Pancreas (tissue), 10 donors: ENCODE measurements at regions of chr12 and their contacts with region 1.

Region 1: GRCh38 chr12:53701518-53702260 is 25.6 kb downstream of the CALCOCO1 start:
- DNase-seq: peak; percentile 63 to 90 (median 80)
- ATAC-seq: peak; percentile 94 to 99 (median 98)
- H3K4me3 ChIP-seq: no peak overlapping the region
- H3K27ac ChIP-seq: no peak overlapping the region
- H3K4me1 ChIP-seq: no peaks in the 10 kb centered on the region
- H3K27me3 ChIP-seq: peaks cover 0 to 13% (median 0%) of the 10 kb centered on the region in 4 donors
- CTCF ChIP-seq: peak; percentile 78 to 86 (median 82)

Region 2: GRCh38 chr12:53625946-53626701 is 75.6 kb before region 1 on chr12 and contains the start of gene ATF7:
- intact Hi-C with region 1: no loop called
- DNase-seq: peak; percentile 96 to 100 (median 99)
- ATAC-seq: peak; percentile 94 to 98 (median 96)
- H3K4me3 ChIP-seq: peak within 1 kb of the TSS; percentile 24 to 60 (median 45)
- H3K27ac ChIP-seq: peak within 1 kb of the TSS; percentile 76 to 97 (median 88)
- H3K4me1 ChIP-seq: peaks cover 3 to 29% (median 16%) of the 10 kb centered on the region in 3 donors
- H3K27me3 ChIP-seq: no peaks in the 10 kb centered on the region
- CTCF ChIP-seq: no peak
- total RNA-seq, gene ATF7: 13.5 to 31.5 (median 19.6) TPM

Region 3: GRCh38 chr12:53746592-53747092 is 45.0 kb after region 1 on chr12:
- intact Hi-C with region 1: loop called in 2 of 3 experiments (anchors 2 to 5 kb)
- DNase-seq: peak; percentile 88 to 96 (median 94)
- ATAC-seq: peak; percentile 88 to 94 (median 91)
- H3K4me3 ChIP-seq: no peak overlapping the region
- H3K27ac ChIP-seq: no peak overlapping the region
- H3K4me1 ChIP-seq: peaks cover 0 to 5% (median 0%) of the 10 kb centered on the region in 3 donors
- H3K27me3 ChIP-seq: peaks cover 0 to 10% (median 5%) of the 10 kb centered on the region in 4 donors
- CTCF ChIP-seq: peak; percentile 99 to 100 (median 100)

Region 4: DNA sequence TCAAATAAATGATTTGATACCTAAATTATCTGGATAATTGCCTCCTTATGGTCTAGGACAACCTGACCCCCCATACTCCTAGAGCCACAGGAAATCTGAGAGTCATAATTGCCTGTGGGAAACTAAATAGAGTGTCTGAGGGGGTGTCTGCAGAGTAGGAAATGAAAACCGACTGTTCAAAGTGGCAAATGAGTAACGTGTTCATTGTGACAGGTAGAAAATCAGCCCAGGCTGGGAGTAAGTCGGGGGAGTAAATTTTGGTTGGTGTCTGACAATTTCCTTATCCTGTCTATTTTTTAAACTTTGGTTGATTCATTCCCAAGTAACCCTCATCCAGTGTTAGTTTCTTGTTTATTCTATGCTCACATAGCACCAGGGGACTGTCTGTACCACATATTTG is 185.3 kb after region 1 on chr12:
- intact Hi-C with region 1: no loop called
- DNase-seq: no peak
- ATAC-seq: no peak
- H3K4me3 ChIP-seq: no peak overlapping the region
- H3K27ac ChIP-seq: no peak overlapping the region
- H3K4me1 ChIP-seq: no peaks in the 10 kb centered on the region
- H3K27me3 ChIP-seq: peaks cover 0 to 1% (median 0%) of the 10 kb centered on the region in 4 donors
- CTCF ChIP-seq: no peak